ENCODE measurements at regions of chr19 and their contacts with region 1.

Region 1: GRCh38 chr19:49676690-49677231 is 310 bp upstream of the PRMT1 start:
- DNase-seq: peak; percentile 97 to 100
- H3K4me3 ChIP-seq: peak overlapping the region; percentile 96
- H3K4me1 ChIP-seq: peaks cover 28% of the 10 kb centered on the region
- H3K27me3 ChIP-seq: no peaks in the 10 kb centered on the region

Region 2: DNA sequence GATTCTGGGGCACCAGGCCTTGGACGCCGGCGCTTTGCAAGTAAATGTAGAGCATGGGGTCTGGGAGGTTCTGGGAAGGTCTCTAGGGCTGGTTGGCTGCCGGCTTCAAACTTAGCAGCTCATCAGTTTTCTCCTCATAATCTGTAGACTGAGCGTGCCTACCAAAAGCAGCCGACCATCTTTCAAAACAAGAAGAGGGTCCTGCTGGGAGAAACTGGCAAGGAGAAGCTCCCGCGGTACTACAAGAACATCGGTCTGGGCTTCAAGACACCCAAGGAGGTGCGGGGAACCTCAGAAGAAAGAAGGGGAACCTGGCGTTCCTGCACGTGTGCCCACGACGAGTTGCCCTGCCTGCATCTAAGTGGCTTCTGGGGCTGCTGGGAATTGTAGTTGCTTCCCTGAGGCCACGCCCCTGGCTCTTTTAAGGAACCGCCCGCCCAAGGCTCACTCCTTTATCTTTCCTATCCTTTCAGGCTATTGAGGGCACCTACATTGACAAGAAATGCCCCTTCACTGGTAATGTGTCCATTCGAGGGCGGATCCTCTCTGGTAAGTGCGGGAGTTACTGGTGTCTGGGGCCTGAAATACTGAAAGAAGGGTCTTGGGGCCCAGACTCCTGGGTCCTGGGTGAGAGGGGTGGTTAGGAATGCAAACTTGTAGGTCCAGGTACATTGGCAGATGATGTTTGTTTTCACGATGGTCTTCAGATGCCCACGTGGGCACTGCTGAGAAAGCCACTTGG is 179.5 kb before region 1 on chr19:
- in situ Hi-C with region 1: loop called (anchors 5 kb)
- DNase-seq: peak; percentile 74 to 81
- H3K4me3 ChIP-seq: peak overlapping the region; percentile 96
- H3K4me1 ChIP-seq: peaks cover 18% of the 10 kb centered on the region
- H3K27me3 ChIP-seq: no peaks in the 10 kb centered on the region

Region 3: GRCh38 chr19:49590071-49590970 is 86.4 kb before region 1 on chr19:
- in situ Hi-C with region 1: loop called (anchors 10 kb)
- DNase-seq: peak; percentile 97 to 99
- H3K4me3 ChIP-seq: peak overlapping the region; percentile 74
- H3K4me1 ChIP-seq: no peaks in the 10 kb centered on the region
- H3K27me3 ChIP-seq: no peaks in the 10 kb centered on the region

Measured in HAP-1 (cell line).